ENCODE measurements at regions of chr13 and their contacts with region 1.

Region 1: GRCh38 chr13:30865123-30866049 is 40.7 kb upstream of the MEDAG start:
- DNase-seq: peak; percentile 86
- ATAC-seq: peak; percentile 67 to 77

Region 2: DNA sequence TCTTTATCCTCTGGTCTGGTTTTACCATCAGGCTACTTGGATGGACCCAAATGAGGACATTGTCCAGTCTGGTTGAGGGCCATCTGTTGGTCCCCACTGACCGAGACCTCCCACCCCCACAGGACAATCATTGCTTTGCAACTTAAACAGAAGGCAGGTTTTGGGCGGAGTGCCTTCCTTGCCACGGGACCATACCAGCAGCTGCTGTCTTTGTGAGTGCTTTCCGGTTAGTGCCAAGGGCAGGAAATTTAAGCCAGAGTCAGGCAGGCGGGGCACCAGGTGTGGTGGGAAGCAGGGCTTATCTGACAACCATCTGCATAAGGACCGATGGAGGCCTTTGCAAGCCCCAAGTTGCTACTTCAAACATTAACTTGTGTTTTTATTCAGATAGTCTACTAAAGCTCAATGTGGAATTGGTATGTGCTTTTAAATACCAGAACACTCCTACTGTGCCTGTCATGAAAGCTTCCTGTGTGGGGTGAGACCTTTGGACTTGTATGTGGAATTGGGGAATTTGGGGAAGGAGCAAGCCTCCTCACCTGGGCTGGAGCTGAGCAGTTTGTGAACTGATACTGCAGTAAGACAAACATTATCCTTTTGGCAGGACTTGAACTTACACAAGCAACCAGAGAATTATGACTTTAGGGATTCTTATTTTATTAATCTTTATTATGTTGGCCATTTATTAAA is 482.4 kb before region 1 on chr13:
- intact Hi-C with region 1: no loop called
- DNase-seq: no peak
- ATAC-seq: no peak

Region 3: GRCh38 chr13:30673669-30674521 is 191.5 kb before region 1 on chr13:
- intact Hi-C with region 1: loop called in 1 of 2 experiments (anchors 10 kb)
- DNase-seq: peak; percentile 90
- ATAC-seq: peak; percentile 95 to 96

Region 4: GRCh38 chr13:30927595-30927994 is 62.2 kb after region 1 on chr13:
- intact Hi-C with region 1: no loop called
- DNase-seq: no peak
- ATAC-seq: no peak

Region 5: GRCh38 chr13:31044377-31045285 is 179.2 kb after region 1 on chr13:
- intact Hi-C with region 1: loop called in 1 of 2 experiments (anchors 10 kb)
- DNase-seq: peak; percentile 81
- ATAC-seq: peak; percentile 85 to 89

Measured in left cardiac atrium (tissue), 4 donors.